ENCODE measurements at regions of chr5 and their contacts with region 1.

Region 1: DNA sequence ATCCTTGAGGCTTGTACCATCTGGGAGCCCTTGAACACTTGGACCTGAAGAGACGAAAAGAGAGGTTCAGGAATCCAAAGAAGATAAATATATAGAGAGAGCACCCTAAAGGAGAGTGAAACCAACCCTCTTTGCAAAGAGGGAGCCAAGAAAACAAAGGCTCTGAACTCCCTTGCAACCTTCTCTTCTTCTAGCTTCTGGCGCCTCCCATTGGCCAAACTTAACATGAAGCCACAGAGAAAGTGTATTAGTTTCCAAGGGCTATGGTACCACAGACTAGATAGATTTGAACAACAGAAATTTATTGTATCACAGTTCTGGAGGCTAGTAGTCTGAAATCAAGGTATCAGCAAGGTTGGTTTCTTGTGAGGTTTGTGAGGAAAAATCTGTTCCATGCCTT is 175.1 kb downstream of the HCN1 start:
- DNase-seq: peak in 1 of 2 experiments; percentile 30
- H3K4me3 ChIP-seq: no peak overlapping the region
- H3K4me3 Mint-ChIP-seq: no peak overlapping the region
- H3K27ac Mint-ChIP-seq: no peak overlapping the region
- H3K4me1 ChIP-seq: no peaks in the 10 kb centered on the region
- H3K4me1 Mint-ChIP-seq: no peaks in the 10 kb centered on the region
- H3K27me3 ChIP-seq: no peaks in the 10 kb centered on the region
- H3K27me3 Mint-ChIP-seq: no peaks in the 10 kb centered on the region
- CTCF ChIP-seq: peak; percentile 15 to 40

Region 2: GRCh38 chr5:44952376-44952775 is 568.7 kb before region 1 on chr5:
- CTCF ChIA-PET with region 1: no interaction called
- POLR2A ChIA-PET with region 1: no interaction called
- intact Hi-C with region 1: loop called (anchors 1 kb)
- DNase-seq: peak in 1 of 2 experiments; percentile 45
- H3K4me3 ChIP-seq: no peak overlapping the region
- H3K4me3 Mint-ChIP-seq: no peak overlapping the region
- H3K27ac Mint-ChIP-seq: no peak overlapping the region
- H3K4me1 ChIP-seq: no peaks in the 10 kb centered on the region
- H3K4me1 Mint-ChIP-seq: no peaks in the 10 kb centered on the region
- H3K27me3 ChIP-seq: no peaks in the 10 kb centered on the region
- H3K27me3 Mint-ChIP-seq: no peaks in the 10 kb centered on the region
- CTCF ChIP-seq: peak; percentile 68 to 81

Region 3: DNA sequence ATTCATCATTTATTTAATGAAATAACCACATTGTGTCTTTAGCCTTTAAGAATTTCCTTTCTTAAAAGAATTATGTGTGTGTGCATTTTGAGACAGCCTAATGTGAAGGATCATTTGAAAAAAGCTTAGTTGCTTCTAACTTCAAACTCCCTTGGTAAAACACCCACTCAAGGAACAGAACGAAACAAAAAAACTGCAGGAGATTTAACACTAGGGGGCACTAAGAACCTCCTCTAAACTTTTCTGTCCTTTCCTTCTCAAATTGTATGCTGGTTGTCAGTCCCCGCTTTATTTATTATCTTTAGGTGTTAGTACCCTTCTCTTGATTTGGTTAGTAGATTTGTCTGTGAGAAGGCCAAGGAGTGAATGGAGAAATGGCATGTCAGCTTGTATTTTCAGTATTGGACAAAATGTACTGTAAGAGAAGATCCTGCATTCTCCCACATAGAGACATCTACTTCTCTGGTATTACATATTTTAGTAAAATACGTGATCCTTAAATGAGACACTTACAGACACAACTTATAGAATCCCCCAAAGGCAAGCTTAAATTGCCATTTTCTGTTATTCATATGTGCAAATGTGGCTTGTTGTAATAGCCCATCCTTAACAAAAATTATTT is 482.6 kb before region 1 on chr5:
- CTCF ChIA-PET with region 1: no interaction called
- POLR2A ChIA-PET with region 1: no interaction called
- intact Hi-C with region 1: loop called (anchors 1 kb)
- DNase-seq: peak in 1 of 2 experiments; percentile 40
- H3K4me3 ChIP-seq: no peak overlapping the region
- H3K4me3 Mint-ChIP-seq: no peak overlapping the region
- H3K27ac Mint-ChIP-seq: no peak overlapping the region
- H3K4me1 ChIP-seq: no peaks in the 10 kb centered on the region
- H3K4me1 Mint-ChIP-seq: no peaks in the 10 kb centered on the region
- H3K27me3 ChIP-seq: no peaks in the 10 kb centered on the region
- H3K27me3 Mint-ChIP-seq: no peaks in the 10 kb centered on the region
- CTCF ChIP-seq: peak; percentile 69 to 74

Region 4: DNA sequence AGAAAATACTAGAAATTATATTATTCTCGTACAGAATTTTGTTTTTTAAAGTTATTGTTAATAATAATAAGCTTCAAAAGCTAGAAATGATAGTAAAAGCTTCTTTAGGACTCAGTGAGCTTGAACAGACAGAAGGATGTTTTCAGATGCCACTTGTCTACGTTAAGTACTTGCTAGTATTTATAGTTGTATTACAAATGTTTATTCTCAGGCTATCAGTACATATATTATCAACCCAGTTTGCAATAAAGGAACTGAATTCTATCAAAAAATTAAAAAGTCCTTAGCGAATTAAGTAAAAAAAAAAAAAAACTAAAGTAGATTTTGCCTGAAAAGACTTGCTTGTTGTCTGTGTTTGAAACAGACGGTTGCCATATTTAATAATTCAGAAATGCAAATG is 151.2 kb after region 1 on chr5:
- CTCF ChIA-PET with region 1: no interaction called
- POLR2A ChIA-PET with region 1: no interaction called
- intact Hi-C with region 1: no loop called
- DNase-seq: no peak
- H3K4me3 ChIP-seq: no peak overlapping the region
- H3K4me3 Mint-ChIP-seq: no peak overlapping the region
- H3K27ac Mint-ChIP-seq: no peak overlapping the region
- H3K4me1 ChIP-seq: no peaks in the 10 kb centered on the region
- H3K4me1 Mint-ChIP-seq: no peaks in the 10 kb centered on the region
- H3K27me3 ChIP-seq: no peaks in the 10 kb centered on the region
- H3K27me3 Mint-ChIP-seq: no peaks in the 10 kb centered on the region
- CTCF ChIP-seq: no peak

Measured in Caco-2 (cell line).